A549 (cell line): ENCODE measurements at regions of chr7 and their contacts with region 1.

Region 1: GRCh38 chr7:31122649-31123058 is 70.5 kb downstream of the ADCYAP1R1 start:
- DNase-seq: peak; percentile 46 to 76
- ATAC-seq: peak; percentile 74 to 89; a peak in 5 of 6 replicates
- H3K4me3 ChIP-seq: no peak overlapping the region
- H3K27ac ChIP-seq: no peak overlapping the region
- H3K4me1 ChIP-seq: no peaks in the 10 kb centered on the region
- CTCF ChIP-seq: peak; percentile 90
- EP300 ChIP-seq: no peak
- POLR2A ChIP-seq: no peak
- RAD21 ChIP-seq: peak; percentile 86 to 87

Region 2: DNA sequence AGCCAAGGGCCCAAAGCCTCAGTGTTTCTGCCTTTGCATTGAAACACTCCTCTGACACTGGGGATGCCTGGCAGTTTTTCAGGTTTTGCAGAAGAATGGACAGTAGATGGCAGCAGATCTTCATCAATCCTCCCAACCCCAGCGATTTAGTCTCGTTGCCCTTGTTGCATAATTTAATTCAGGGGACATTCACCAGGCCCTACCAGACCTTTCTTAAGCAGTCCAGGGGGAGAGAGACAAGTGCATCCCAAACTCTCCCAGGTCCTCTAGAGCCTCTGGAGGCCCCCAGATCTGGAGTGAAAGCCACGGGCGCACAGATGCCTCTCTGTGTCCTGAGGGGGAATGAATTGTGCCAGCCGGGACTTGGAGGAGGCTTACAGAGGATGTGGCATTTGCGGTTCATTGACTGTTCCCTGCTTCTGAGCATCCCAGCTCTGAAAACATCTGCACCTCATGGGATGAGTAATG is 321.8 kb before region 1 on chr7:
- CTCF ChIA-PET with region 1: interaction called, 23 read pairs
- POLR2A ChIA-PET with region 1: no interaction called
- DNase-seq: peak; percentile 58 to 79
- ATAC-seq: peak; percentile 81 to 91; a peak in 5 of 6 replicates
- H3K4me3 ChIP-seq: no peak overlapping the region
- H3K27ac ChIP-seq: no peak overlapping the region
- H3K4me1 ChIP-seq: peaks cover 19% of the 10 kb centered on the region
- CTCF ChIP-seq: peak; percentile 84
- EP300 ChIP-seq: no peak
- POLR2A ChIP-seq: no peak
- RAD21 ChIP-seq: peak; percentile 87 to 90

Region 3: DNA sequence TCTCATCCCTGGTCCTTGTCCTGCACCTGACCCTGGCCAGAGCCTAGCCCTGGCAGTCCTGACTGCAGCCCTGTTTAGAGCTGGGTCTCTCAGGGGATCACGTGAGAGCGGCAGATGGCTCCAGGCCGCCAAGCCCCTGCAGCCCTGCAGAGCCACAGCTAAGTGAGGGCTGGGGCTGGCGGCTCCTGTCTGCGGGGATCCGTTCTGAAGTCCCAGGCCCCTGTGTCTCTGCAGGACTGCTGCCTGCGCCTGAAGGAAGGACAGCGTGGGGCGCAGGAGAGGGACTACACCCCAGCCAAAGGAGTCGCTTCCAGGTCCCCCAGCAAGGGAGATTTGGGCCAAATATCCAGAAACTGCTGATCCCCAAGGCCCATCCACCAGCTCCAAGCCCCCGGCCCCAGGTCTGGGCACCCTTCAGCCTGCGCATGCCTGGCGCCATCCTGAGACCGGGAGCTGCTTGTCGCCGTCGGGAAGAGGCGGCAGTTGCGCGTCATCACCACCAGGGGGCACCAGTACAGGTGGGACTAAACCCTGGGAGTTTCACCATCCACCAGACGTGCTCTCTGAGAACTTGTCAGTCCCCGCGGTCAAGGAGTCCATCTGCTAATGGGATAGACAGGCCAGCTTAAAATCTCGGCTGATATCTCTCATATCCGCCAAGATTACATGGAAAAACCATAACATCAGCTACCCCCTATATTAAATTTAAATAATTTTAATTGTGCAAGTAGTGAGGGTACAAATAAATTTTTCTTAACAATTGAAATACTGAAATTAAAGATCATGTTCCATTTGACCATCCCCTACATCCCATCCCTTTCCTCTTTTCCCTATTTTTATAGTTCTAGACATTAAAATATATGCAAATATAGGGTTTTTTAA is 184.0 kb before region 1 on chr7:
- CTCF ChIA-PET with region 1: interaction called, 19 read pairs
- POLR2A ChIA-PET with region 1: no interaction called
- DNase-seq: peak; percentile 81 to 88
- ATAC-seq: peak; percentile 85 to 96
- H3K4me3 ChIP-seq: 0 out of 3 replicates have a peak overlapping the region, but pooled peaks have one; percentile 8
- H3K27ac ChIP-seq: peak overlapping the region in 1 of 2 experiments; percentile 46; a peak in 1 of 6 replicates
- H3K4me1 ChIP-seq: 0 out of 3 replicates have a peak, but pooled peaks cover 3% of the 10 kb centered on the region
- CTCF ChIP-seq: peak; percentile 84
- EP300 ChIP-seq: no peak
- POLR2A ChIP-seq: no peak
- RAD21 ChIP-seq: peak; percentile 50 to 52

Region 4: DNA sequence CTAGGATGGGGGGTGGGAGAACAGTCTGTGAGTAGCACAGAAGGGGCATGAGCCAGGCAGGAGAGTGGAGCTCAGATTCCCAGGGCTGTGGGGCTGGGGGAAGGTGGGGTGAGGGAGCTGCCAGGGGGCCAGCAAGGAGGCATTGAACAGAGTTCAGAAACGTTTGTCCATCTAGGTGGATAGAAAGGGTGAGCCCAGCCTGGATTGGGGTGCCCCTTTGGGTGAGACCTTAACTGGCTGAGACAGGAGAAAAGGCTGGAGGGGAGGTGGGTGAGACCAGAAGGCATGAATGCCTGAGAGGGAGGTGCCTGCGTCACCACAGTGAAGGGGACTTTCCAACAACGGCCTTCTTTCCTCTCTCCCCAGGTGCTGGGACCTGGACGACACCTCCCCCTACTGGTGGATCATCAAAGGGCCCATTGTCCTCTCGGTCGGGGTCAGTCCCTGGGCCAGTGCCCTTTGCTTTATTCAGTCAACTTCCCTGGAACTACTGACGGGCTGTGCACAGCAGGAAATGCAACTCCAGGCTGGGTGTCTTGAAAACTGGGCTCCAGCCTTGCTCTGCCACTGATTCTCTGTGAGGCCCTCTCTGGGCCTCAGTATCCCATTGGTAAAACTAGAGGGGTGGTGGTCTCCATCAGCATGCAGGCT is 147.9 kb before region 1 on chr7:
- CTCF ChIA-PET with region 1: interaction called, 319 read pairs
- POLR2A ChIA-PET with region 1: no interaction called
- DNase-seq: peak; percentile 57 to 72
- ATAC-seq: peak; percentile 67 to 89; a peak in 4 of 6 replicates
- H3K4me3 ChIP-seq: no peak overlapping the region
- H3K27ac ChIP-seq: peak overlapping the region in 1 of 2 experiments; percentile 39; a peak in 1 of 6 replicates
- H3K4me1 ChIP-seq: 0 out of 3 replicates have a peak, but pooled peaks cover 5% of the 10 kb centered on the region
- CTCF ChIP-seq: peak; percentile 43
- EP300 ChIP-seq: no peak
- POLR2A ChIP-seq: no peak
- RAD21 ChIP-seq: peak; percentile 39 to 64; a peak in 4 of 5 replicates

Region 5: GRCh38 chr7:30988351-30989000 is 134.2 kb before region 1 on chr7:
- CTCF ChIA-PET with region 1: interaction called, 319 read pairs
- POLR2A ChIA-PET with region 1: interaction called, 4 read pairs
- DNase-seq: peak in 1 of 2 experiments; percentile 31
- ATAC-seq: peak; percentile 13 to 17; a peak in 1 of 6 replicates
- H3K4me3 ChIP-seq: no peak overlapping the region
- H3K27ac ChIP-seq: peak overlapping the region in 1 of 2 experiments; percentile 63; a peak in 3 of 6 replicates
- H3K4me1 ChIP-seq: peaks cover 11% of the 10 kb centered on the region
- CTCF ChIP-seq: no peak
- EP300 ChIP-seq: no peak
- POLR2A ChIP-seq: no peak
- RAD21 ChIP-seq: no peak

Region 6: DNA sequence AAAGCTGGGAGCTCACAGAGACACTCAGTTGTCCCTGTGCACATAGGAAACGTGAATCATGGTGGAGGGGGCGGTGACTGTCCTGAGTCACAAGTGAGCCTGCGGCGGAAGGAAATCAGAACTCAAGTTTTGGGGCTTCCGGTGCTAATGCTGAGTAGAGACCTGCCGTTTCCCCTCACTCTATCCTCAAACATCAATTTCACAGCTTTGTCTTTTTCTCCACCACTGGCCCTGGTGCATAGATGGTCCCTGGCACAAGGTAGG is 48.6 kb before region 1 on chr7:
- CTCF ChIA-PET with region 1: interaction called, 10 read pairs
- POLR2A ChIA-PET with region 1: no interaction called
- DNase-seq: no peak
- ATAC-seq: no peak
- H3K4me3 ChIP-seq: no peak overlapping the region
- H3K27ac ChIP-seq: no peak overlapping the region
- H3K4me1 ChIP-seq: no peaks in the 10 kb centered on the region
- CTCF ChIP-seq: no peak
- EP300 ChIP-seq: no peak
- POLR2A ChIP-seq: no peak
- RAD21 ChIP-seq: no peak

Region 7: DNA sequence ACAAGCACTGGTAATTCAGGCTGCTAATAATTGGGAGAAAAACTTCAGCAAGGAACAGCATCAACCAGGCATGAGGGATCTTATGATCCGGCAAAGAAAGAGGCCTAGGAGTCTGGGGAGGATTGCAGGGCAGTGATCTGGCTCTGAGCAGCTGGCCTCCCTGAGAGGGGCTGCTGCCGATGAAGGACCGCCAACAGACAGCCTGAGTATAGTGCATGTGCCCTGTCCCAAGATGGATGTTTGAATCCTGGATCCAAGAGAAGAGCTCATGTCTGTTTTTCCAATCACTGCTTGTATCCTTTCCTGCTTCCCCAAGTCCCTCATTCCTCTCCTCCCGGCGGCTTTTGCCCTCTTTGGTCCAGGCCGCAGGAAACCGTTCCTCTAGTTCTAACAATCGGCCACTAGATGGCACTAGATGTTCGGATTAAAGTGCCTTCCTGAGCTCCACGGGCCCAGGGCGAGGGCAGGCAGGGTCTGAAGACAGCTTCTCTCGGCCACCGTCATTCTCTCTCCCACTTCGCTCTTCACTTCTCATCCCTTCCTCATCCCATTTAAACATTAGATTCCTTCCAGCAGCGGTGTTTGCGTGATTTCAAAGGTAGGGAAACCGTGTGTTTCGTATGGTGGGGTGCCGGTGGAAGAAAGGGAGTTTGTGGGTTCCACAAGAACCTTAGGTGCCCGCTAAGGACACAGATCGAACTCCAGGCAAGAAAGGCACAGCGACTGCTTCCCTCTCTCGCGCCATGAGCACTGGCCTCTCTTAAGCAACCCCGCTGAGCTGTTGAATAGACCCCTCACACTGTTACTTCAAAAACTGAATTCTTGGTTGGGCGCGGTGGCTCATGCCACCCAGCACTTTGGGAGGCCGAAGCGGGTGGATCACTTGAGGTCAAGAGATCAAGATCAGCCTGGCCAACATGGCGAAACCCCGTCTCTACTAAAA is 11.9 kb after region 1 on chr7:
- CTCF ChIA-PET with region 1: interaction called, 91 read pairs
- POLR2A ChIA-PET with region 1: no interaction called
- DNase-seq: peak; percentile 67 to 76
- ATAC-seq: peak; percentile 98 to 100
- H3K4me3 ChIP-seq: no peak overlapping the region
- H3K27ac ChIP-seq: no peak overlapping the region
- H3K4me1 ChIP-seq: no peaks in the 10 kb centered on the region
- CTCF ChIP-seq: peak; percentile 79
- EP300 ChIP-seq: no peak
- POLR2A ChIP-seq: no peak
- RAD21 ChIP-seq: peak; percentile 78 to 82